PC-3 (cell line): ENCODE measurements at regions of chr11 and their contacts with region 1.

Region 1: DNA sequence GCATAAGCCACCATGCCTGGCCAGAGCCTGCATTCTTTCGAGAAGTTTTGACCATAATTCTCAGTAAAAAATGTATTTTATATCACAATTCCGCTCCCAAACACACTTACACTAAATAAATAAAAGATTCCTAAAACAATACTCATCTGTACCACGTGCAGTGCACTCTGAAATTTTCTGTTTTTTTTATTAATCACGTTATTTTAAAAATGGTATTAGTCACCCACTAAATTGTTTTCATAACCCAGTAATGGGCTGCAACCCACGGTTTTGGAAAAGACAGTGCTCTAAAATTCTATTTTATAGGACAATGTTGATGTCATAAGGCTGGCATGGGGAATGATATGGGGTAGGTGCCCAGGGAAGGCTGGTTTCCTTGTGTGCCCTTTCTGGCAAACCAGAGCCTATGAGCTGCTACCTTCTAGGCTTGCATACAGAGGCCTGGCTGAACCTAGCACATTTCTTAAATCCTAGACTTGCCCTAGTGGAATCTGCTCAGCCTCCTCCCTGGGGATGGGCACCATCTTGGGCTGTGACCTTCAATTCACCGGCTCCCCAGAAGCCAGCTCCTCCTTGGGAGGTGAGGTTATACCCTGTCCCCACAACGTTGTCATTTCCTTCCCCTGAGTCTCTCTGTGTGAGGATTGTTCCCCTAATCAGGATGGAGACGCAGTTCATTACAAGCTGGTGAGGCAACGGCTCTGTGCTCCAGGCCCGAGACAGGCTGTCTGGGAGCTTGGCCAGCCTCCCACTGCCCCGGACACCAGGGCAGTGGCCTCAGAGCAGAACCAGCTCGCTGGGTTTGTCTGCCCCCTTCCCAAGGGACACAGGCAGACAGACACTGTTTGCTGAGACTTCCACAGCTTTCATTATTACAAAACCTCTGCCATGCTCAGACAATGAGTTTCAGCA is 116.5 kb upstream of the NAV2 start:
- DNase-seq: peak; percentile 92
- ATAC-seq: peak; percentile 87
- H3K4me3 ChIP-seq: peak overlapping the region; percentile 31; the same call in 1 of the 2 replicates
- H3K27ac ChIP-seq: peak overlapping the region; percentile 98
- H3K4me1 ChIP-seq: peaks cover 39% of the 10 kb centered on the region
- H3K27me3 ChIP-seq: no peaks in the 10 kb centered on the region
- CTCF ChIP-seq: no peak

Region 2: DNA sequence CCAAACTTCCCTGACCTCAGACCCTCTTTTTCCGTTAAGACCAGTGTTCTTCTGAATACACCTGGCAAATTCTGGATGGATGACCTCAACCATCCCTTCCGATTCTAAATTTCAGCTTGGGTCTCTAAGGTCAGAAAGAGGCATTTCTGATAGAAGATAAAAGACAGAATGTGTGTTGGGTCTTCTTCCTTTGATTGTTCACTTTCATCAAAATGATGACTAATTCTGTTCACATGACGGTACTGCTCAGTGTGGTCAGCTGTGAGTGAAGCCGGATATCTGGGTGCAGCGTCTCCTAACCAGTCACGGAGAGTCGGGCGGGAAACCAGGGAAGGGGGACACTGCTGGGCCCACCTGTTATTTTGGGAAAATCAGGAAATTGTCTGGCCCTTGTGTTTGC is 35.1 kb before region 1 on chr11:
- CTCF ChIA-PET with region 1: no interaction called
- POLR2A ChIA-PET with region 1: no interaction called
- intact Hi-C with region 1: loop called (anchors 5 kb)
- DNase-seq: peak; percentile 31
- ATAC-seq: peak; percentile 55
- H3K4me3 ChIP-seq: no peak overlapping the region
- H3K27ac ChIP-seq: no peak overlapping the region
- H3K4me1 ChIP-seq: peaks cover 10% of the 10 kb centered on the region; the same call in 1 of the 2 replicates
- H3K27me3 ChIP-seq: no peaks in the 10 kb centered on the region
- CTCF ChIP-seq: no peak

Region 3: DNA sequence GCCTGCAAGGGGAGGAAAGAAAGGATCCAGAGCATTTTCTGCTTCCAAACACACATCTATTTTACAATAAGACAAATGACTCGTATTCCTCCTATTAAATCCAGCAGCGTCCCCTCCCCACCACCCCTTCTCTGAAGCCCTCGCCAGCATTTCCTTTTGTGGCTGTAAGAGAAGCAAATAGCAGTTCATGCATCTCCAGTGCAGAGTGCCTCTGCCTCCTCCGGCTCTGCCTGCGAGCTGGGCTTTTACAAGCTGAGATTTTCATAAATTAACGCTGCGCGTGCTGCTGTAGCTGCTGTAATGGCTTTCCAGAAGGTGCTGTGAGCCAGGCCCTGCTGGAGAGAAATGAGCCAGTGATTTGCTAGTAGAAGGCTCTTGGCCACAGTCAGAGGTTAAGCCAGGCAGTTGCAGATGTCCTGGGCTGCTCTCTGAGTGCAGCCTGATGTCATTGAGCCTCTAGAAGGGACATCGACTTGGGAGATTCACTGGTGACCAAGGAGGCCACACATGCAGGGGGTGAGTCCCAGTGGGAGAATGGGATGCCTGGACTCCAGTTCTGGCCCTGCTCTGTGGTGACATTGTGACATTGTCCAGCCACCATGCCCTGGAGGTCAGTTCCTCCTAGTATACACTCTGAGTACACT is 18.0 kb before region 1 on chr11:
- CTCF ChIA-PET with region 1: no interaction called
- POLR2A ChIA-PET with region 1: interaction called, 5 read pairs
- intact Hi-C with region 1: loop called (anchors 1 kb)
- DNase-seq: peak; percentile 62
- ATAC-seq: peak; percentile 95
- H3K4me3 ChIP-seq: 0 out of 2 replicates have a peak overlapping the region, but pooled peaks have one; percentile 7
- H3K27ac ChIP-seq: peak overlapping the region; percentile 61
- H3K4me1 ChIP-seq: peaks cover 33% of the 10 kb centered on the region
- H3K27me3 ChIP-seq: no peaks in the 10 kb centered on the region
- CTCF ChIP-seq: no peak

Region 4: DNA sequence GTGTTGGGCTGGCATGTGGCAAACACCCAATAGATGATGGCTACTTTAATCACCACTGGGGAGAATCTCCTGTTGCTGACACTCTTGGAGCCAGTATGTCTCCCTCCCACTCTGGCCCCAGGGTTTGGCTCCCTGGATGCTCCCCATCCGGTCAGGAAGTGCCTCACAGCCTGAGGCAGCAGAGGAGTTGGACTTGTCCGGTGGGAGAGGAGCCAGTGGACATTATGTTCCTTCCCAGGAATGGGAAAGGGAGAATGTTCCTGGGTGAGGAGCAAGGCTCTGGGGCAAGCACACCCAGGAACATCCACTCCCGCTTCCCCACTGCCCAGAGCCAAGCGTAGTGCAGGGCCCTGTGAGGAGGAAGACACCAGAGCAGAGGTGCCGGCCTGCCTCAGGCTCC is 31.9 kb after region 1 on chr11:
- CTCF ChIA-PET with region 1: interaction called, 3 read pairs
- POLR2A ChIA-PET with region 1: no interaction called
- intact Hi-C with region 1: loop called (anchors 1 kb)
- DNase-seq: peak; percentile 92
- ATAC-seq: peak; percentile 89
- H3K4me3 ChIP-seq: no peak overlapping the region
- H3K27ac ChIP-seq: peak overlapping the region; percentile 78
- H3K4me1 ChIP-seq: peaks cover 33% of the 10 kb centered on the region
- H3K27me3 ChIP-seq: no peaks in the 10 kb centered on the region
- CTCF ChIP-seq: no peak

Region 5: DNA sequence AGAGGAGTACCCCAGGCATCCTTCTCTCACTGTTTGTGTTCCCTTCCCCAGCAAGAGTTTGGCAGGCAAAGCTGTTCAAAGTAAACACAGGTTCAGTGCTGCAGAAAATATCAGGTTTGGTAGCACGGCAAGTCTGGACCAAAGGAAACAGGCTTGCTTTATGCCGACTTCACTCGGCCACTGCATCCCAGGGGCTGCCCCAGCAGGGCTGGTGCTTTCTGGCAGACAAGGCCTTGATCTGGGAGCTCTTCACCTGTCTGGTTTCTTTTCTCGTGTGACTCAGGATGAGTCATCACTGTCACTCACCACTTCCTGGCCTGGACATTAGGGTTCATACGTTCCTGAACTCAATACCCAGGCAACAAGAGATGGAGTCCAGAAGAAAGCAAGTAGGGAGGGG is 64.0 kb after region 1 on chr11:
- CTCF ChIA-PET with region 1: no interaction called
- POLR2A ChIA-PET with region 1: no interaction called
- intact Hi-C with region 1: loop called (anchors 1 kb)
- DNase-seq: peak; percentile 97
- ATAC-seq: peak; percentile 97
- H3K4me3 ChIP-seq: no peak overlapping the region
- H3K27ac ChIP-seq: peak overlapping the region; percentile 51
- H3K4me1 ChIP-seq: peaks cover 25% of the 10 kb centered on the region
- H3K27me3 ChIP-seq: no peaks in the 10 kb centered on the region
- CTCF ChIP-seq: no peak

Region 6: GRCh38 chr11:19679952-19680828 is 84.1 kb after region 1 on chr11:
- CTCF ChIA-PET with region 1: no interaction called
- POLR2A ChIA-PET with region 1: no interaction called
- intact Hi-C with region 1: loop called (anchors 1 kb)
- DNase-seq: peak; percentile 97
- ATAC-seq: peak; percentile 93
- H3K4me3 ChIP-seq: peak overlapping the region; percentile 20; the same call in 1 of the 2 replicates
- H3K27ac ChIP-seq: peak overlapping the region; percentile 66
- H3K4me1 ChIP-seq: peaks cover 29% of the 10 kb centered on the region
- H3K27me3 ChIP-seq: no peaks in the 10 kb centered on the region
- CTCF ChIP-seq: no peak

Region 7: GRCh38 chr11:19723572-19724342 is 127.7 kb after region 1 on chr11:
- CTCF ChIA-PET with region 1: no interaction called
- POLR2A ChIA-PET with region 1: no interaction called
- intact Hi-C with region 1: loop called (anchors 1 kb)
- DNase-seq: peak; percentile 84
- ATAC-seq: peak; percentile 68
- H3K4me3 ChIP-seq: 0 out of 2 replicates have a peak overlapping the region, but pooled peaks have one; percentile 12
- H3K27ac ChIP-seq: peak overlapping the region; percentile 68
- H3K4me1 ChIP-seq: peaks cover 70% of the 10 kb centered on the region
- H3K27me3 ChIP-seq: no peaks in the 10 kb centered on the region
- CTCF ChIP-seq: no peak